ENCODE measurements at regions of chr7 and their contacts with region 1.

Region 1: GRCh38 chr7:145599376-145599775 is 517.2 kb upstream of the CNTNAP2 start:
- DNase-seq: peak in 1 of 2 experiments; percentile 51
- H3K4me3 ChIP-seq: no peak overlapping the region
- H3K27ac ChIP-seq: 0 out of 2 replicates have a peak overlapping the region, but pooled peaks have one; percentile 21
- H3K4me1 ChIP-seq: no peaks in the 10 kb centered on the region
- H3K27me3 ChIP-seq: no peaks in the 10 kb centered on the region
- CTCF ChIP-seq: no peak

Region 2: DNA sequence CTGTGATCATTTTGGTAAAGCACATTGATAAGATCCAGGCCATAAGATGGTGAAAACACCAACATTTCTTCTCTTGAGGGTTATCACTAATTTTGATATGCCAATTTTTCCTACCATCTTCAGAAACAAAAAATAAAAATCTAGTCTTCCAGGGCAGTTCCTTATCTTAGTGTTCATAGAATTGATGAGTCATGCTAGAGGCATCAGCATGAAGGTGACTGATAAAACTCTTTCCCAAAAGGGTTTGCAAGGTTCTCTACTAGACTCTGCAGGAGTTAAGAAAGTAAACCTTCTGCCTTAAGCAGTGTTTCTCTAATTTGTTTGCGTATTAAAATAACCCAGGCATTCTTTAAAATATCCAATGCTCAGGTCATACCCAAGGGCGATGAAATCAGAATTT is 34.1 kb after region 1 on chr7:
- CTCF ChIA-PET with region 1: no interaction called
- POLR2A ChIA-PET with region 1: no interaction called
- intact Hi-C with region 1: loop called (anchors 1 kb)
- DNase-seq: peak in 1 of 2 experiments; percentile 46
- H3K4me3 ChIP-seq: no peak overlapping the region
- H3K27ac ChIP-seq: peak overlapping the region; percentile 38; the same call in 1 of the 2 replicates
- H3K4me1 ChIP-seq: peaks cover 12% of the 10 kb centered on the region
- H3K27me3 ChIP-seq: no peaks in the 10 kb centered on the region
- CTCF ChIP-seq: no peak

Measured in PC-9 (cell line).